AG04449 (cell line): ENCODE measurements at regions of chr2 and their contacts with region 1.

Region 1: DNA sequence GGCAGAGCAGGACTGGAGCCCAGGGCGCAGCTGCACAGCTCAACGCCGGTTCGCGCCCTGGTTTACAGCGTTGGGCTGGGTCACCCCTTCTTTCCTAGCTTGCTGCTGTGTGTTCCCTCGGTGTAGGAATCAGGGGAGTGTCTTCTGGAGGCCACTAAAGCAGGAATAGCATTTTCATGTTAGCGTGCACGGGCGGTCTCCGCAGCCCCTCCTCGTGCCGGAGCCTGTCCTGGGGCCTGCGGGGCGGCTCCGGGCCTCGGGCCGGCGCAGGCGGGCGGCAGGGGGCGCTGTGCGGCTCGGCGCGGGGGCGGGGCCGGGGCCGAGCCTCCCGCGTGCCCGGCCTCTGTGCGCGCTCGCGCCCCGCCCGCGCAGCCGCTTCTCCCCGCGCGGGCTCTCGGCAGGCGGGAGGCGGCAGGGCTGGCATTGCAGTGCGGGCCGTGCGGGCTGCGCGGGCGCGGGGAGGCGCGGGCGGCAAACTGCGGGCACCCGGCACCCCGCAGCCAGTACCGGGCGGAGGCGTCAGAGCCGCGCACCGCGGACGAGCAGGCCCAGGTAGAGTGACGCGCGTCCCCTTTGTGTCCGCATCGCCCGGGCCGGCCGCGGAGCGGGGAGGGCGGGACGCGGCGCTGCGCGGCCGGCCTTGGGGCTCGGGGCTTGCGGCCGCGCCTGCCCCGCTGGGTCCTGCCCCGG is at the start of gene RNF144A:
- DNase-seq: no peak
- H3K4me3 ChIP-seq: peak within 1 kb of the TSS; percentile 54
- CTCF ChIP-seq: peak; percentile 26

Region 2: GRCh38 chr2:6443061-6443823 is 474.0 kb before region 1 on chr2:
- CTCF ChIA-PET with region 1: no interaction called
- POLR2A ChIA-PET with region 1: no interaction called
- DNase-seq: no peak
- H3K4me3 ChIP-seq: no peak overlapping the region
- CTCF ChIP-seq: no peak

Region 3: DNA sequence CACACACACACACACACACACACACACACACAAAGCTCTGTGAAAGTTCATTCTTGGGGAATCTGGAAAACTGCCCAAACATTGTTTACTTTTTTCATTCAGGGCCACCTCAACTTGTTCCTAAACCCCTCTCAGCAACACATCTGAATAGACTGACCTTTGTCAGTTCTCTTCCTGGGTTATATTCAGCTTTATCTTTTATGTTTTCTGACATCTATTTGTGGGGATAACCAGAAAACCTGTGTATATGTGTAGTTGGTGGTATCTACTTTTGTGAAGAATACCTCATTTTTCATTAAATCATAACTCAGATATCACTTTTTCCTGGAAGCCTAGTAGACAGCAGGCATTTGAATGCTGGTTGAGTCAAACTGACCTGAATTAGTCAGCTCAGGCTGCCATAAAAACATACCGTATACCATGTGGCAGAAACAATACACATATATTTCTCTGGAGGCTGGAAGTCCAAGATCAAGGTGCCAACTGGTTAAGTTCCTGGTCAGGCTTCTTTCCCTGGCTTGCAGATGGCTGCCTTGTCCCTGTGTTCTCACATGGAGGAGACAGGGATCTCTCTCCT is 11.0 kb before region 1 on chr2:
- CTCF ChIA-PET with region 1: interaction called, 10 read pairs
- POLR2A ChIA-PET with region 1: no interaction called
- DNase-seq: no peak
- H3K4me3 ChIP-seq: no peak overlapping the region
- CTCF ChIP-seq: no peak

Region 4: DNA sequence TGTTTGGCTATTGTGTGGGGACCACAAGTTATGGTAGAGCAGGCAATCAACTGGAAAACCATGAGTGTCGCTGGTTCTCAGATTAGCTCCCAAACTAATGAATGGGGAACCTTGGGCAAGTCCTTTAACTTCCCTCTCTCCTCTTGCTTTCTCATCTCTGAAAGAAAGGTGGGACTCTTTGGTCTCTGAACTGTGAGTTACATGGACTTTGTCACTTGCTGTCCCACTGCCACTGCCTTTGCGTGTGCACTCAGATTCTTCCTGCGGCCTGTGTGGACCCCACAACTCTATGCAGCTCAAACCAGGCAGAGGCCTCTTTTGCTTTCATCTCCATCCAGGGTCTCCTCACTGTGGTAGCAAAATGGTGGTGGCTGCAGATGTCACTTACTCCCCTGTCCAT is 86.7 kb after region 1 on chr2:
- CTCF ChIA-PET with region 1: no interaction called
- POLR2A ChIA-PET with region 1: no interaction called
- DNase-seq: no peak
- H3K4me3 ChIP-seq: no peak overlapping the region
- CTCF ChIP-seq: no peak